Heart right ventricle (tissue), 16 donors: ENCODE measurements at regions of chr17 and their contacts with region 1.

Region 1: GRCh38 chr17:33072421-33073196 is 81.0 kb downstream of the SPACA3 start:
- DNase-seq: no peak
- ATAC-seq: no peak
- H3K4me3 ChIP-seq: no peak overlapping the region
- H3K27ac ChIP-seq: no peak overlapping the region
- H3K4me1 ChIP-seq: peaks cover 0 to 8% (median 0%) of the 10 kb centered on the region in 9 donors
- H3K27me3 ChIP-seq: peaks cover 0 to 17% (median 15%) of the 10 kb centered on the region in 7 donors
- CTCF ChIP-seq: no peak

Region 2: GRCh38 chr17:33120103-33120502 is 47.5 kb after region 1 on chr17:
- intact Hi-C with region 1: loop called in 1 of 10 experiments (anchors 10 kb)
- DNase-seq: no peak
- ATAC-seq: no peak
- H3K4me3 ChIP-seq: no peak overlapping the region
- H3K27ac ChIP-seq: no peak overlapping the region
- H3K4me1 ChIP-seq: no peaks in the 10 kb centered on the region
- H3K27me3 ChIP-seq: peaks cover 0 to 54% (median 29%) of the 10 kb centered on the region in 7 donors
- CTCF ChIP-seq: no peak

Region 3: DNA sequence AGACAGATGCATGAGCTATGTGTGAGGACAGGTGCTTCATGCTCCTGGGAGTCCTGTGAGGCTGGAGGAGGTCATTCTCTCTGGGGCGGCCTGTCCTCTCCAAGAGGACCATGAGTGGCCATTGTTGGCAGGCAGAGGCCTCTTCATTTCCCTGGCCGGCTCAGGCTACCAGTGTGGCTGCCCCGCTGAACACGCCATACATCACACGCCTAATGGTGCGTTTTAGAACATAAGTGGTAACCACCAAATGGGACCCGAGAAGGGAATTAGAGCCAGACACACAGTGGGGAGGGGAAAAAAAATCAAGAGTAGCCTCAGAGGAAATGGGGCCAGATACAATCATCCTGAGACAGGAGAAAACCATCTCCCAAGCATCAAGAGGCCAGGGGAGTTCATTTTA is 59.0 kb after region 1 on chr17:
- intact Hi-C with region 1: loop called in 2 of 10 experiments (anchors 10 kb)
- DNase-seq: no peak
- ATAC-seq: no peak
- H3K4me3 ChIP-seq: no peak overlapping the region
- H3K27ac ChIP-seq: no peak overlapping the region
- H3K4me1 ChIP-seq: no peaks in the 10 kb centered on the region
- H3K27me3 ChIP-seq: peaks cover 0 to 46% (median 10%) of the 10 kb centered on the region in 7 donors
- CTCF ChIP-seq: no peak

Region 4: GRCh38 chr17:33234930-33235685 is 162.5 kb after region 1 on chr17:
- intact Hi-C with region 1: no loop called
- DNase-seq: peak; percentile 40 to 48
- ATAC-seq: peak; percentile 71 to 97 (median 88)
- H3K4me3 ChIP-seq: no peak overlapping the region
- H3K27ac ChIP-seq: no peak overlapping the region
- H3K4me1 ChIP-seq: peaks cover 0 to 23% (median 6%) of the 10 kb centered on the region in 9 donors
- H3K27me3 ChIP-seq: peaks cover 0 to 17% (median 5%) of the 10 kb centered on the region in 7 donors
- CTCF ChIP-seq: no peak